ENCODE measurements at regions of chr7 and their contacts with region 1.

Region 1: DNA sequence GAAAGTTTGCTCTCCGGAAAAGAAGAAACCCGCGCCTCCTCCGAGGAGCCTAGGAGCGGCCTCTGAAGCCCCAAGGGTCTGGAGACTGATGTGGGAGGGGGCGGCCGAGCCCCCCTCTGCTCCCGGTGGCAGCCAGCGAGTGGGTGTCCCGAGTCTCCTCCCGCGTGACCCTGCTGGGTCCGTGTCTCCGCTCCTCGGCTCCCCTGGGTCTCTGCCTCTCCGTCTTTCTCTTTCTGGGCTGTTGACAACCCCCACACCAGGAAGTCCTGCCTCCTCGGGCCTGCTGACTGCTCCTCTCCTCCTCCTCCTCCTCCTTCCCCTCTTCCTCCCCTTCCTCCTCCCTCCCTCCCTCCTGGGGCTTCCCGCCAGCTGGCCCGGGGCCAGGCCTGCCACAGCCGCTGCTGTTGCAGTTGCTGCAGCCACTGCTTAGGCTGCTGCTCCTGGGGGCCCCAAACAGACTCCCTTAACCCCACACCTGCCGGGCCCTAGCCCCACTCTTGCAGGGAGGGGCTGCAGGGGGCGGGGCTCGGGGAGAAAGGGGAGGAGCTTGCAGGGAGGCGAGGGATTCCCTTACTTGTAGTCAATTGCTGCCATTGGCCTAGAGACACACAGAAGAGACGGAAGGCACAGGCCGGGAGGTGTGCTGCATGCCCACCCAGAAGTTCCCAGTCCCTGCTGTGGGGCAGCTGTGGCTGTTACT is at the start of gene TSC22D4:
- DNase-seq: peak; percentile 97
- H3K4me3 ChIP-seq: peak within 1 kb of the TSS; percentile 86
- H3K27ac ChIP-seq: peak within 1 kb of the TSS; percentile 75
- H3K4me1 ChIP-seq: peaks cover 40% of the 10 kb centered on the region
- CTCF ChIP-seq: no peak
- total RNA-seq, gene TSC22D4: 38.5 and 41.4 TPM in 2 replicates

Region 2: GRCh38 chr7:99918959-99919813 is 559.9 kb before region 1 on chr7 and contains the start of gene TRIM4:
- CTCF ChIA-PET with region 1: no interaction called
- POLR2A ChIA-PET with region 1: no interaction called
- intact Hi-C with region 1: no loop called
- DNase-seq: peak; percentile 93
- H3K4me3 ChIP-seq: peak within 1 kb of the TSS; percentile 96
- H3K27ac ChIP-seq: peak within 1 kb of the TSS; percentile 42
- H3K4me1 ChIP-seq: peaks cover 19% of the 10 kb centered on the region
- CTCF ChIP-seq: 0 out of 2 replicates have a peak, but pooled peaks have one; percentile 39
- total RNA-seq, gene TRIM4: 7.5 and 12.8 TPM in 2 replicates

Region 3: DNA sequence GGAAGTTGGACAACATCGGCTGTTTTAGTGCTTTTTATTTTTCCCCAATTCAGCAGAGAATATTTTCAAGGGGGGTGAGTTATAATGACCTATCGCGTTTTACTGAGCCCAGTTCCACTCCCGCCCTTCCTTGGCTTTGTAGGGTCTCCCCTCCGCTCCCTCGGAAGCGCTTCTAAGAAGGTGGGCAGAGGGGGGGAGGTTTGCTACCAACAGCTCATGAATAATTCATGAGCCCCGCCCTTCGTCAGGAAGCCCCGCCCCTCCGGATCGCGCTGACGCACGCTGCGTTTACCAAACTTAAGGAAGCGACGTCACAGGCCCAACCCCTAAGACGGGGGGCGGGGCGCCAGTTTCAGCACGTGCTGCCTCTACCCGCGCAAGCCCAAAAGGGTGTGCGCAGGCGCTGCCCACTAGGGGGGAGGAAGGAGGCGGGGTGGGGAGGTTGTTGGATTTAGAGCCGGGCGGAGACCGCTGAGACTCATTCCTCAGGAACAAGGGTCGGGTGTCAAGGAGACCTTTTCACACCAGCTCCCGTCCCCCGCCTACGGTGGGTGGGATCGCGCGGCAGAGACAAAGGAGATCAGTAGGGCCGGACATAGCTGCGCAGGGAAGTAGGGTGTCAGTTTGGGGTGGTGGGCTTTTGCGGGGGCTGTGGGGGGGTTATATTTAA is 50.0 kb before region 1 on chr7:
- CTCF ChIA-PET with region 1: no interaction called
- POLR2A ChIA-PET with region 1: no interaction called
- intact Hi-C with region 1: loop called (anchors 1 kb)
- DNase-seq: peak; percentile 100
- H3K4me3 ChIP-seq: peak overlapping the region; percentile 91
- H3K27ac ChIP-seq: peak overlapping the region; percentile 93
- H3K4me1 ChIP-seq: peaks cover 43% of the 10 kb centered on the region
- CTCF ChIP-seq: no peak; the same call in 1 of the 2 replicates

Region 4: GRCh38 chr7:100521076-100521475 is 42.0 kb after region 1 on chr7:
- CTCF ChIA-PET with region 1: no interaction called
- POLR2A ChIA-PET with region 1: no interaction called
- intact Hi-C with region 1: no loop called
- DNase-seq: no peak
- H3K4me3 ChIP-seq: no peak overlapping the region
- H3K27ac ChIP-seq: no peak overlapping the region
- H3K4me1 ChIP-seq: peaks cover 7% of the 10 kb centered on the region
- CTCF ChIP-seq: no peak

Region 5: GRCh38 chr7:100538654-100539435 is 59.7 kb after region 1 on chr7 and contains the start of gene AGFG2:
- CTCF ChIA-PET with region 1: no interaction called
- POLR2A ChIA-PET with region 1: no interaction called
- intact Hi-C with region 1: loop called (anchors 2 kb)
- DNase-seq: peak; percentile 100
- H3K4me3 ChIP-seq: peak within 1 kb of the TSS; percentile 75
- H3K27ac ChIP-seq: peak within 1 kb of the TSS; percentile 56
- H3K4me1 ChIP-seq: peaks cover 41% of the 10 kb centered on the region
- CTCF ChIP-seq: no peak
- total RNA-seq, gene AGFG2: 7.9 and 11.5 TPM in 2 replicates

Region 6: GRCh38 chr7:102012996-102013461 is 1533.9 kb after region 1 on chr7:
- CTCF ChIA-PET with region 1: no interaction called
- POLR2A ChIA-PET with region 1: no interaction called
- intact Hi-C with region 1: no loop called
- DNase-seq: no peak
- H3K4me3 ChIP-seq: no peak overlapping the region
- H3K27ac ChIP-seq: no peak overlapping the region
- H3K4me1 ChIP-seq: no peaks in the 10 kb centered on the region
- CTCF ChIP-seq: no peak